ENCODE measurements at regions of chr11 and their contacts with region 1.

Region 1: GRCh38 chr11:44095506-44096394 is at the start of gene EXT2:
- DNase-seq: peak; percentile 80 to 90 (median 81)
- H3K4me3 ChIP-seq: peak within 1 kb of the TSS; percentile 58
- H3K4me3 Mint-ChIP-seq: peak within 1 kb of the TSS; percentile 81 to 95 (median 89)
- H3K27ac ChIP-seq: peak within 1 kb of the TSS; percentile 64
- H3K27ac Mint-ChIP-seq: peak within 1 kb of the TSS in 7 of 8 donors; percentile 54 to 86 (median 74)
- H3K4me1 ChIP-seq: peaks cover 16% of the 10 kb centered on the region
- H3K4me1 Mint-ChIP-seq: peaks cover 35 to 49% (median 48%) of the 10 kb centered on the region in 3 donors
- H3K27me3 ChIP-seq: no peaks in the 10 kb centered on the region
- H3K27me3 Mint-ChIP-seq: peaks cover 0 to 5% of the 10 kb centered on the region in 2 donors
- total RNA-seq, gene EXT2: 37.4 to 38.5 TPM

Region 2: GRCh38 chr11:44065841-44066731 is 29.7 kb before region 1 on chr11 and contains the start of gene ACCS:
- CTCF ChIA-PET with region 1: interaction called, 36 read pairs
- POLR2A ChIA-PET with region 1: interaction called, 7 read pairs
- DNase-seq: peak; percentile 84 to 93 (median 89)
- H3K4me3 ChIP-seq: peak within 1 kb of the TSS; percentile 87
- H3K4me3 Mint-ChIP-seq: peak within 1 kb of the TSS; percentile 90 to 97 (median 94)
- H3K27ac ChIP-seq: peak within 1 kb of the TSS; percentile 79
- H3K27ac Mint-ChIP-seq: peak within 1 kb of the TSS; percentile 80 to 96 (median 92)
- H3K4me1 ChIP-seq: peaks cover 15% of the 10 kb centered on the region
- H3K4me1 Mint-ChIP-seq: peaks cover 22 to 31% (median 31%) of the 10 kb centered on the region in 3 donors
- H3K27me3 ChIP-seq: no peaks in the 10 kb centered on the region
- H3K27me3 Mint-ChIP-seq: no peaks in the 10 kb centered on the region
- total RNA-seq, gene ACCS: 2.7 to 3.3 TPM

Region 3: DNA sequence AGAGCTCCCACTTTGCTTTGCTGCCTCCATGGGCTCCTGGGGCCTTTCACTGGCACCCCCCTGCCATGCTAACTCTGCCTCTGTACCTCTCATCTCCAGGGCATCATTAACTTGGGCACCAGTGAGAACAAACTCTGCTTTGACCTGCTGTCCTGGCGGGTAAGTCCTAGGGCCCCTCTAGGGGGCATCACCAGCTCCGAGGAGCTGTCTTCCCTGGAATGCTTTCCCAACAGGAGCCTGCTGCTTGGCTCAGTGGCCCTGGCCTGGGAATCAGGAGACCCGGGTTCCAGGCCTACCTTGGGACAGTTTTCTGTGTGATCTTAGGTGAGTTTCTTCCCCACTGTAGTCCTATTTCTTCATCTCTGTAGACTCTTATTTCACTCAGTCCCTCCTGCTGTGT is 24.6 kb before region 1 on chr11:
- CTCF ChIA-PET with region 1: interaction called, 36 read pairs
- POLR2A ChIA-PET with region 1: interaction called, 7 read pairs
- DNase-seq: no peak
- H3K4me3 ChIP-seq: no peak overlapping the region
- H3K4me3 Mint-ChIP-seq: peak overlapping the region in 1 of 7 donors; percentile 9
- H3K27ac ChIP-seq: no peak overlapping the region
- H3K27ac Mint-ChIP-seq: no peak overlapping the region
- H3K4me1 ChIP-seq: peaks cover 7% of the 10 kb centered on the region
- H3K4me1 Mint-ChIP-seq: peaks cover 8 to 19% (median 18%) of the 10 kb centered on the region in 3 donors
- H3K27me3 ChIP-seq: no peaks in the 10 kb centered on the region
- H3K27me3 Mint-ChIP-seq: no peaks in the 10 kb centered on the region

Region 4: GRCh38 chr11:44083906-44084305 is 11.8 kb before region 1 on chr11:
- CTCF ChIA-PET with region 1: interaction called, 14 read pairs
- POLR2A ChIA-PET with region 1: no interaction called
- DNase-seq: no peak
- H3K4me3 ChIP-seq: no peak overlapping the region
- H3K4me3 Mint-ChIP-seq: no peak overlapping the region
- H3K27ac ChIP-seq: no peak overlapping the region
- H3K27ac Mint-ChIP-seq: no peak overlapping the region
- H3K4me1 ChIP-seq: no peaks in the 10 kb centered on the region
- H3K4me1 Mint-ChIP-seq: no peaks in the 10 kb centered on the region
- H3K27me3 ChIP-seq: no peaks in the 10 kb centered on the region
- H3K27me3 Mint-ChIP-seq: peaks cover 0 to under 1% of the 10 kb centered on the region in 2 donors

Region 5: GRCh38 chr11:44351006-44351660 is 255.4 kb after region 1 on chr11:
- CTCF ChIA-PET with region 1: no interaction called
- POLR2A ChIA-PET with region 1: no interaction called
- DNase-seq: no peak
- H3K4me3 ChIP-seq: no peak overlapping the region
- H3K4me3 Mint-ChIP-seq: no peak overlapping the region
- H3K27ac ChIP-seq: no peak overlapping the region
- H3K27ac Mint-ChIP-seq: no peak overlapping the region
- H3K4me1 ChIP-seq: no peaks in the 10 kb centered on the region
- H3K4me1 Mint-ChIP-seq: no peaks in the 10 kb centered on the region
- H3K27me3 ChIP-seq: no peaks in the 10 kb centered on the region
- H3K27me3 Mint-ChIP-seq: peaks cover 23 to 62% of the 10 kb centered on the region in 2 donors